H1 (cell line): ENCODE measurements at regions of chr11 and their contacts with region 1.

Region 1: GRCh38 chr11:112588252-112588694 is 327.6 kb upstream of the PLET1 start:
- DNase-seq: peak in 1 of 2 experiments; percentile 19
- H3K4me3 ChIP-seq: no peak overlapping the region
- H3K27ac ChIP-seq: no peak overlapping the region
- H3K4me1 ChIP-seq: peaks cover 0 to 4% (median 1%) of the 10 kb centered on the region in 4 experiments; a peak in 1 of 7 replicates
- H3K27me3 ChIP-seq: no peaks in the 10 kb centered on the region
- CTCF ChIP-seq: peak in 2 of 3 experiments; percentile 73 to 74; a peak in 3 of 4 replicates
- EP300 ChIP-seq: no peak
- POLR2A ChIP-seq: no peak
- RAD21 ChIP-seq: peak; percentile 88 to 93

Region 2: GRCh38 chr11:112289588-112290492 is 298.4 kb before region 1 on chr11:
- CTCF ChIA-PET with region 1: interaction called, 14 read pairs
- POLR2A ChIA-PET with region 1: no interaction called
- DNase-seq: peak in 1 of 2 experiments; percentile 94
- H3K4me3 ChIP-seq: peak overlapping the region; percentile 39 to 71 (median 60)
- H3K27ac ChIP-seq: no peak overlapping the region
- H3K4me1 ChIP-seq: peaks cover 0 to 5% (median 2%) of the 10 kb centered on the region in 4 experiments; a peak in 3 of 7 replicates
- H3K27me3 ChIP-seq: peaks cover 0 to 7% (median 1%) of the 10 kb centered on the region in 4 experiments; a peak in 4 of 7 replicates
- CTCF ChIP-seq: peak; percentile 76 to 93 (median 87)
- EP300 ChIP-seq: no peak
- POLR2A ChIP-seq: no peak
- RAD21 ChIP-seq: peak; percentile 79 to 91

Region 3: GRCh38 chr11:112453601-112454577 is 134.4 kb before region 1 on chr11:
- CTCF ChIA-PET with region 1: interaction called, 33 read pairs
- POLR2A ChIA-PET with region 1: interaction called, 3 read pairs
- DNase-seq: peak; percentile 10 to 85
- H3K4me3 ChIP-seq: no peak overlapping the region
- H3K27ac ChIP-seq: no peak overlapping the region
- H3K4me1 ChIP-seq: no peaks in the 10 kb centered on the region
- H3K27me3 ChIP-seq: no peaks in the 10 kb centered on the region; a peak in 1 of 7 replicates
- CTCF ChIP-seq: peak; percentile 66 to 81 (median 73)
- EP300 ChIP-seq: no peak
- POLR2A ChIP-seq: no peak
- RAD21 ChIP-seq: peak; percentile 47 to 59

Region 4: DNA sequence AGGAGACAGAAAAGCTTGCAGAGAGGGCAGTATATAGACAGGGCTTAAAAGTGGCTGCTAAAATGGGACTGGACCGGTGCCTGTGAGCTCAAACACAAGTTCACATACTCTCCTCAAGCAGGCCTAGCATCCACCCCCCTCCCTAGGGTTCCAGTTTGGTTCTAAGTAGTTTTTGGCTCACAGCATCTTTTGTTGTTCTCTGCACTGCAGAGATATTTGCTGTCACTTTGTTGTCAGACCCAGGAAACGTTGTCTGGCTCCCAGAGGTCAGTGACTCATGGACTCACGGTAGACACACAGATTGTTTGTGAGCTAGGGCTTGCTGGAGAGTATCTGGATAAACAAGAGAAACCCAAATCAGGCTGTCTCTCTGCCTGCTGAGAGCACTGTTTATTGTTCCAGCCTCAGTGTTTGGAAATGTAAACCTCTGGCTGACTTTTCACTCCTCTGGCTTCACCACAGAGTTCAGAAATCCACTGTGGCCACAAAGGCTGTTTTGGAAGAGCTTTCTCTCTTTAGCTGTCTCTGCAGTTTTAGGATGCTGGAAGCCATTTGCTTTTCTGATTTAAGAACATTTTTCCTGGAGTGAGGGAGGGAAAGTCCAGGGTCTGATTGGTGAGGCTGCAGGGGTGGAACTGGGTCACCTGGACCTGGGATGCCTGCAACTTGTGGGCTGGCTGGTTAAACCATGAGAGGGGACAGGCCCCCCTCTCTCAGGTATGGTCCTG is 23.9 kb before region 1 on chr11:
- CTCF ChIA-PET with region 1: interaction called, 11 read pairs
- POLR2A ChIA-PET with region 1: no interaction called
- DNase-seq: no peak
- H3K4me3 ChIP-seq: no peak overlapping the region
- H3K27ac ChIP-seq: no peak overlapping the region
- H3K4me1 ChIP-seq: no peaks in the 10 kb centered on the region
- H3K27me3 ChIP-seq: no peaks in the 10 kb centered on the region; a peak in 1 of 7 replicates
- CTCF ChIP-seq: no peak
- EP300 ChIP-seq: no peak
- POLR2A ChIP-seq: no peak
- RAD21 ChIP-seq: no peak

Region 5: GRCh38 chr11:112656772-112657428 is 68.6 kb after region 1 on chr11:
- CTCF ChIA-PET with region 1: no interaction called
- POLR2A ChIA-PET with region 1: no interaction called
- DNase-seq: no peak
- H3K4me3 ChIP-seq: no peak overlapping the region
- H3K27ac ChIP-seq: no peak overlapping the region
- H3K4me1 ChIP-seq: no peaks in the 10 kb centered on the region
- H3K27me3 ChIP-seq: no peaks in the 10 kb centered on the region
- CTCF ChIP-seq: no peak
- EP300 ChIP-seq: no peak
- POLR2A ChIP-seq: no peak
- RAD21 ChIP-seq: no peak

Region 6: DNA sequence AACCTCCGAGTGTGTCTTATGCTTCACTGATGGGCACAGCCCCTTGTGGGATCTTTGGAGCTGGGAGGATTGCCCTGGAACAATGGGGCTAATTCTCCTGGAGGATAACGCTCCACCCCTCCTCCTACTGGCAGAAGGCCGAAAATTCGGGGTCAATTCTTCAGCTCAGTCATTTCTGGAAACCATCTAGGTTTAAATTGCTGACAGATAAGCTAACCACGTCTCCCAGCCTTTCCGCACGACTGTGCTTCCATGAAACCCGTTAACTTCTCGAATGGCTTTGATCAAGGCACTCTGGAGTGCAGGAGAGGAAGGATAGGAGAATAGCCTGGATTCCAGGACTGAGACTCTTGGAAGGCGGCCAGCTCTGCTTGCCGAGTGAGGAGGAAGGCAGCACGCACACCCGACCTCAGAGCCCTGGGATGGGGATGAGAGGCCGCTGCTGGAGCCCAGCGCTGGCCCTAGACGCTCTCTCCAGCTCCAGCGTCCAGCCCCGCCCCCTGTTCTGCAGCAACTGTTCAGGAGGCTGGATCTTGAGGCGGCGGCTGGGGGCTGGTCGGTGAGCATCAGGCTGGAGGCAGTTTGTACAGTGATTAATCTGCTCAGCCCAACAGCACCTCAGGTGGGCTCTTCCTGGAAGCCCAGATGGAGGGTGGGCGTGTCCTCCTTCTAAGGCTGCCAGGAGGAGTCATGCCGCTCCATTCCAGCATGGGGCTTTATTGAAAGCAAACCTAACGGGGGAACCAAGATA is 196.2 kb after region 1 on chr11:
- CTCF ChIA-PET with region 1: interaction called, 19 read pairs
- POLR2A ChIA-PET with region 1: no interaction called
- DNase-seq: no peak
- H3K4me3 ChIP-seq: no peak overlapping the region
- H3K27ac ChIP-seq: no peak overlapping the region
- H3K4me1 ChIP-seq: peaks cover 0 to 7% (median 2%) of the 10 kb centered on the region in 4 experiments; a peak in 3 of 7 replicates
- H3K27me3 ChIP-seq: no peaks in the 10 kb centered on the region
- CTCF ChIP-seq: peak; percentile 20 to 52 (median 23); a peak in 3 of 4 replicates
- EP300 ChIP-seq: no peak
- POLR2A ChIP-seq: no peak
- RAD21 ChIP-seq: peak; percentile 26 to 44; a peak in 3 of 4 replicates

Region 7: GRCh38 chr11:113289431-113290187 is 701.3 kb after region 1 on chr11:
- CTCF ChIA-PET with region 1: interaction called, 31 read pairs
- POLR2A ChIA-PET with region 1: no interaction called
- DNase-seq: peak; percentile 36 to 86
- H3K4me3 ChIP-seq: no peak overlapping the region
- H3K27ac ChIP-seq: no peak overlapping the region
- H3K4me1 ChIP-seq: peaks cover 0 to 7% (median 0%) of the 10 kb centered on the region in 4 experiments; a peak in 1 of 7 replicates
- H3K27me3 ChIP-seq: no peaks in the 10 kb centered on the region; a peak in 1 of 7 replicates
- CTCF ChIP-seq: peak; percentile 91 to 98 (median 95)
- EP300 ChIP-seq: no peak
- POLR2A ChIP-seq: no peak
- RAD21 ChIP-seq: peak; percentile 99